ENCODE measurements at regions of chr22 and their contacts with region 1.

Region 1: GRCh38 chr22:37752466-37753087 is 55.2 kb upstream of the GCAT start:
- DNase-seq: peak; percentile 100
- H3K4me3 Mint-ChIP-seq: peak overlapping the region; percentile 53
- H3K27ac Mint-ChIP-seq: peak overlapping the region; percentile 72
- H3K4me1 Mint-ChIP-seq: peaks cover 43% of the 10 kb centered on the region
- H3K27me3 Mint-ChIP-seq: no peaks in the 10 kb centered on the region
- CTCF ChIP-seq: no peak

Region 2: DNA sequence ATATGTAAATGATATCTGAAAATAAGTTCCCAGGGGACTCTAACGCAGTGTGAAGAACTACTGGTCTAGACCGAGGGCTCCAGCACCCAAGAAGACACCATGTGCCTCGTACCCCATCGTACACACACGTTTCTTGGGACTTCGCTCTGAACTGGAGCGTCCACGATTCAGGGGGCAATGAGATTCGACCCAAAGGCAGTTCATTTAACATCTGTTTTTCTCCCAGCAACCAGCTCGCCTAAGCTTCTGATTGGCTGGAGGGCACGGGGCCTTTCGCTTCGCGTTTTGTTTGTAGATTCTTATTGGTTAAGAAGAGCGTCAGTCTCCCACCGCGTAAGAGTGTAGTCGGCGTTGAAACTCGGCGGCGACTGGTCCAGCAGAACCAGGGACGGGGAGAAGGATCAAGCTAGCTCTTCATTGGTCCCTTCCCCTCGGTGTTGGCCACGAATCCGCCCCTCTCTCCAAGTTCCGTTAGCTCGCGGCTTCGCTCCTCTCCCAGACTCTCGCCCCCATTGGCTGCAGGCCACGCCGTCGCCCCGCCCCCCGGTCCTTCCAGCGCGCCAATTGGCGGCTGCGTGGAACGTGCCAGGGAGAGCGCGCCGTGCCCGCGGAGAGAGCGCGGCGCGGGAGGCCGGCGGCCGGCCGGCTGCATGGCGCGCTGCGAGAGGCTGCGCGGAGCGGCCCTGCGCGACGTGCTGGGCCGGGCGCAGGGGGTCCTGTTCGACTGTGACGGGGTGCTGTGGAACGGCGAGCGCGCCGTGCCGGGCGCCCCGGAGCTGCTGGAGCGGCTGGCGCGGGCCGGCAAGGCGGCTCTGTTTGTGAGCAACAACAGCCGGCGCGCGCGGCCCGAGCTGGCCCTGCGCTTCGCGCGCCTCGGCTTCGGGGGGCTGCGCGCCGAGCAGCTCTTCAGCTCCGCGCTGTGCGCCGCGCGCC is 94.2 kb before region 1 on chr22 and contains the start of gene PDXP:
- CTCF ChIA-PET with region 1: interaction called, 3 read pairs
- POLR2A ChIA-PET with region 1: interaction called, 19 read pairs
- intact Hi-C with region 1: no loop called
- DNase-seq: peak; percentile 100
- H3K4me3 Mint-ChIP-seq: peak within 1 kb of the TSS; percentile 89
- H3K27ac Mint-ChIP-seq: peak within 1 kb of the TSS; percentile 87
- H3K4me1 Mint-ChIP-seq: peaks cover 22% of the 10 kb centered on the region
- H3K27me3 Mint-ChIP-seq: no peaks in the 10 kb centered on the region
- CTCF ChIP-seq: no peak
- total RNA-seq, gene PDXP: 10.3 and 10.5 TPM in 2 replicates

Region 3: GRCh38 chr22:37686002-37686982 is 66.3 kb before region 1 on chr22 and contains the start of gene NOL12:
- CTCF ChIA-PET with region 1: interaction called, 3 read pairs
- POLR2A ChIA-PET with region 1: interaction called, 27 read pairs
- intact Hi-C with region 1: no loop called
- DNase-seq: peak; percentile 90
- H3K4me3 Mint-ChIP-seq: peak within 1 kb of the TSS; percentile 96
- H3K27ac Mint-ChIP-seq: peak within 1 kb of the TSS; percentile 96
- H3K4me1 Mint-ChIP-seq: peaks cover 30% of the 10 kb centered on the region
- H3K27me3 Mint-ChIP-seq: no peaks in the 10 kb centered on the region
- CTCF ChIP-seq: no peak
- total RNA-seq, gene NOL12: 47.1 and 50.8 TPM in 2 replicates

Region 4: DNA sequence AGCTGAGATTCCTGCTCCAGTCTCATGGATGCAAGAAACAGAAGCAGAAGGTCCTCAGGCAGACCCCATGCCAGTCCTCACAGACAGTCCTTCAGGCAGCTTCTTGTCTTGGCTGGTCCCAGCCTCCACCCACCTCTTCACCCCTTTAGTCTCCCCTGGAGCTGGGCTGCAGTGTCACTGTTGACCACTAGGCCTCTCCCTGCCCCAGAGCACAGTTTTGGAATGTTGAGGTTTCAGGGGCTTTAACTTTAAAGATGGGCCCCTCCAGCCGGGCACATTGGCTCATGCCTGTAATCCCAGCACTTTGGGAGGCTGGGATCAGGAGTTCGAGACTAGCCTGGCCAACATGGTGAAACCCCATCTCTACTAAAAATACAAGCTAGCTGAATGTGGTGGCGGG is 15.7 kb after region 1 on chr22:
- CTCF ChIA-PET with region 1: no interaction called
- POLR2A ChIA-PET with region 1: interaction called, 19 read pairs
- intact Hi-C with region 1: no loop called
- DNase-seq: no peak
- H3K4me3 Mint-ChIP-seq: no peak overlapping the region
- H3K27ac Mint-ChIP-seq: no peak overlapping the region
- H3K4me1 Mint-ChIP-seq: no peaks in the 10 kb centered on the region
- H3K27me3 Mint-ChIP-seq: no peaks in the 10 kb centered on the region
- CTCF ChIP-seq: no peak

Region 5: DNA sequence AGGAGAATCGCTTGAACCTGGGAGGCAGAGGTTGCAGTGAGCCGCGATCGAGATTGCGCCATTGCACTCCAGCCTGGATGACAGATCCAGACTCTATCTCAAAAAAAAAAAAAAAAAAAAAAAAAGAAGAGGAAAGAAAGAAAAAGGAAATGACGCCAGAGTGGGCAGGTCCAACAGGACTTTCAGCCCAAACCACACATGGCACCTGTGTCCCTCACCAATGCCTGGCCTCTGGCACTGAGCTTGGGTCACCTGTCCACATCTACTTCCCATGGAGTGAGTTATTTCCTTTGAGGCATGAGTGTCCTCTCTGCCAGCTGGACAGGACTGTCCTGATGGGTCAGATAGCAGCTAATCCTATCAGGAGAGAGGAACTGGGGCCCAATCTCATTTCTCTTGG is 39.9 kb after region 1 on chr22:
- CTCF ChIA-PET with region 1: interaction called, 4 read pairs
- POLR2A ChIA-PET with region 1: interaction called, 3 read pairs
- intact Hi-C with region 1: loop called (anchors 5 kb)
- DNase-seq: no peak
- H3K4me3 Mint-ChIP-seq: no peak overlapping the region
- H3K27ac Mint-ChIP-seq: no peak overlapping the region
- H3K4me1 Mint-ChIP-seq: peaks cover 5% of the 10 kb centered on the region
- H3K27me3 Mint-ChIP-seq: no peaks in the 10 kb centered on the region
- CTCF ChIP-seq: no peak

Measured in MCF 10A (cell line).